Ovary (tissue), 10 donors: ENCODE measurements at regions of chr6 and their contacts with region 1.

Region 1: GRCh38 chr6:111210194-111210728 is 123.0 kb downstream of the SLC16A10 start:
- DNase-seq: no peak
- H3K4me3 ChIP-seq: no peak overlapping the region
- H3K27ac ChIP-seq: no peak overlapping the region
- H3K4me1 ChIP-seq: no peaks in the 10 kb centered on the region
- H3K27me3 ChIP-seq: no peaks in the 10 kb centered on the region
- CTCF ChIP-seq: peak; percentile 24 to 33 (median 32)
- EP300 ChIP-seq: no peak
- POLR2A ChIP-seq: no peak

Region 2: GRCh38 chr6:110999634-111000270 is 210.5 kb before region 1 on chr6:
- intact Hi-C with region 1: loop called in 1 of 4 experiments (anchors 10 kb)
- DNase-seq: no peak
- H3K4me3 ChIP-seq: no peak overlapping the region
- H3K27ac ChIP-seq: no peak overlapping the region
- H3K4me1 ChIP-seq: no peaks in the 10 kb centered on the region
- H3K27me3 ChIP-seq: no peaks in the 10 kb centered on the region
- CTCF ChIP-seq: no peak
- EP300 ChIP-seq: no peak
- POLR2A ChIP-seq: no peak

Region 3: GRCh38 chr6:111011360-111012142 is 198.7 kb before region 1 on chr6:
- intact Hi-C with region 1: loop called in 3 of 4 experiments (anchors 2 to 10 kb)
- DNase-seq: no peak
- H3K4me3 ChIP-seq: no peak overlapping the region
- H3K27ac ChIP-seq: no peak overlapping the region
- H3K4me1 ChIP-seq: peaks cover 3% of the 10 kb centered on the region
- H3K27me3 ChIP-seq: no peaks in the 10 kb centered on the region
- CTCF ChIP-seq: peak in 2 of 3 donors; percentile 25 to 31
- EP300 ChIP-seq: no peak
- POLR2A ChIP-seq: no peak

Region 4: GRCh38 chr6:111242452-111242851 is 32.2 kb after region 1 on chr6:
- intact Hi-C with region 1: no loop called
- DNase-seq: no peak
- H3K4me3 ChIP-seq: no peak overlapping the region
- H3K27ac ChIP-seq: no peak overlapping the region
- H3K4me1 ChIP-seq: no peaks in the 10 kb centered on the region
- H3K27me3 ChIP-seq: no peaks in the 10 kb centered on the region
- CTCF ChIP-seq: no peak
- EP300 ChIP-seq: no peak
- POLR2A ChIP-seq: no peak